AG04449 (cell line): ENCODE measurements at regions of chrX and their contacts with region 1.

Region 1: DNA sequence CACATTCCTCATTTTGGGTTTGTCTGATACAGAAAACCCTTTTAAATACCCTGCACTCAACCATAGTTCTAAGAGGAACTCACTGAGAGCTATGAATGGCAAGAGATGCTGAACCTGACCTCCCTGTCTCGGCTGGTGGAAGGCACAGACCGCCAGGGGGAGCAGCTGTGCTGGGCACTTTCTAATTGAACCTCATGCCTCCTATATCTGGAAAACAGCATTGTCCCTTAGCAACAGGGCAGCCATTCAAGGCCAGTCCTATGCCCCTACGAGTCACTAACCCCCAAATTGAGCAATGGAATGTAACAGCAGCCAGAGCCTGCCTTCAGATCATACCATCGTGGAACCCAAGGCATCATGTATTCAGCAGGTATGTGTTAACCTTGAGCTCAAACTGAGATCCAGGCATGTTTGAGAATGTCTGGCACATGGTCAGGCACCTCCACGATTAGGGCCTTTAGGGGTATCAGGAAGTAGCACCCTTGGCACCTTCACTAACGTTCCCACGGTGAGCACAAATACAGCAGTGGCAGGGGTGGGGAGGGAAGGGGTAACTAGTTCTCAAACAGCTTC is 5.1 kb downstream of the USP27X start:
- DNase-seq: no peak
- H3K4me3 ChIP-seq: no peak overlapping the region
- CTCF ChIP-seq: peak; percentile 72

Region 2: GRCh38 chrX:49816435-49816834 is 67.9 kb before region 1 on chrX:
- CTCF ChIA-PET with region 1: no interaction called
- POLR2A ChIA-PET with region 1: no interaction called
- DNase-seq: no peak
- H3K4me3 ChIP-seq: no peak overlapping the region
- CTCF ChIP-seq: no peak

Region 3: DNA sequence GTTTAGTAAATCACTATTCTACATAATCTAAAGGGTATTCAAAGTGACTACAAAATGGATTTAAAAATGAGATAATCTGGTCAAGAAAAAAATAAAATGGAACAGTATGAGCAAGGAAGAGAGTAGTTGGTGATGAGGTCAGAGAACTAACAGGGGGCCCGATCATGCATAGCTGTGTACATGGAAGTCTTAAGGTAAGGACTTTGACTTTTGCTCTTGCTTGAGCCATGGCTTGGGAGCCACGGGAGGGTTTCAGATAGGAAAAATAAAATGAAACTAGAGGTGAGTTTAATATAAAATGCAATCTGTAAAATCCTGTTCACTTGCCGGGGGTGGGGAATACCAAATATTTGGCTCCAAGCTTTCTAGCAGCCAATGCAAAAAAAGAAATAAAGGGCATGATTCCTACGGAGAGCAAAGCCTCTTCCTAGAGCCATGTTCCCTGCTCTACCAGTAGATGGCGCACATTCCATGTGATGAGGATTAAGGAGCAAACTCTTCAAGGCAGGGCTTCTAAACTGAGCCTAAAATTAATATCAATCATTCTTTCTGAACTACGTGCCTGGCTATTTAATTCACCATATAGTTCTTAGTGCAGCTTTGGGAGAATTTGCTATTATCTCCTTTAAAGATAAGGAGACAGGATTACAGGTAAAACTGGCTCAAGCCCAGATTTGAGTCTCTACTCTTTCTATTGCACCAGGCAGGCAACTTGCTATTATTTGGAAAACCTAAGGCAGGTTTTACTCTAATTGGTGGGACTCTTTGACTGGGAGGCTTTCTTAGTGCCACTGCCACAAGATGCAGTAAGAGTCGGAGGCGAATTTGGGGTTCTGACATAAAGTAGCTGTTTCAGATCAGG is 31.2 kb after region 1 on chrX:
- CTCF ChIA-PET with region 1: interaction called, 23 read pairs
- POLR2A ChIA-PET with region 1: no interaction called
- DNase-seq: no peak
- H3K4me3 ChIP-seq: no peak overlapping the region
- CTCF ChIP-seq: peak; percentile 74

Region 4: DNA sequence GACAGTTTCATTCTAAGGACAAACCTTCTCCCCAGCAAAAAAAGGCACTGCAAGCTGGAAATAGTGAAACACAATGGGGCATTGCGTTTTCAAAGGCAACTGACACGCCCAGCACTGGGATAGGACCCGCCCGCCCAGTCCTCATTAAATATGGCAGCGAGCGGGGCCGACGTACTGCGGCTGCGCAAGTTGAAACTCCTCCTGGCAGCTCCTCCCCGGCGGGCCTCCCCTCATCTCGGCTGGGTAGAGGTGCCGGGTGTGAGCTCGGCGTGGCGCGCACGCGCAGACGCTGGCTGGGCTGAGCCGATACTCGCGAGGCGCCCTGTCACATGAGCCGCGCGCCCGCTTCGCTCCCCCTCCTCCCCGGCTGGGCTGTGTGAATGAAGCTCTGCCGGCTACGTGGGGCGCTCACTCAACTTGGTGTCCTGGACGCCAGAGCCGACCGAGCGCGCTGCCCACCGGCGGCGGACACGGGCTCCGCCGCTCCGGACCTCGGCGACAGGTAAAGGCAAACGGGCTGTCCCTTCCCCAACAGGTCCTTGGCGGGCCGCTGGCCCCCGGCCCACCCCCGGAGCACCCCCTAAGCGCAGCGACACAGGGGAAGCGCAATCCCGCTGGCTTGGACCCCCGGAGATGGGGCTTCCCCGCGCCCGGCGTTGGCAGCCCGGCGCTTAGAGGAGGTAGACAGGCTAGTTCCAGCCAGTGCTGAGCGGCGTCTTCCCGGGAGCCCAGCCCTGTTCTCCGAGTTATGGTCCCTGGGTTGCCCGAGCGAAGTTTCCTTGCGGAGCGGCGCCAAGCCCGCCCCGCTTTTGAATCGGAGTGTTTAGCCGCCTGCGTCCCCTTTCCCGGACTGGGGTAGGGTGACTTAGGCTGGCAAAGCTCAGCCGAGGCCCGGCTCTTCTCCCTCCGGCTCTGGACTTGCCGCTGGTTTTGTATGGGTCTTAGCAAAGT is 38.2 kb after region 1 on chrX and contains the start of gene CLCN5:
- CTCF ChIA-PET with region 1: interaction called, 23 read pairs
- POLR2A ChIA-PET with region 1: no interaction called
- DNase-seq: peak; percentile 56
- H3K4me3 ChIP-seq: peak within 1 kb of the TSS; percentile 64
- CTCF ChIP-seq: no peak

Region 5: DNA sequence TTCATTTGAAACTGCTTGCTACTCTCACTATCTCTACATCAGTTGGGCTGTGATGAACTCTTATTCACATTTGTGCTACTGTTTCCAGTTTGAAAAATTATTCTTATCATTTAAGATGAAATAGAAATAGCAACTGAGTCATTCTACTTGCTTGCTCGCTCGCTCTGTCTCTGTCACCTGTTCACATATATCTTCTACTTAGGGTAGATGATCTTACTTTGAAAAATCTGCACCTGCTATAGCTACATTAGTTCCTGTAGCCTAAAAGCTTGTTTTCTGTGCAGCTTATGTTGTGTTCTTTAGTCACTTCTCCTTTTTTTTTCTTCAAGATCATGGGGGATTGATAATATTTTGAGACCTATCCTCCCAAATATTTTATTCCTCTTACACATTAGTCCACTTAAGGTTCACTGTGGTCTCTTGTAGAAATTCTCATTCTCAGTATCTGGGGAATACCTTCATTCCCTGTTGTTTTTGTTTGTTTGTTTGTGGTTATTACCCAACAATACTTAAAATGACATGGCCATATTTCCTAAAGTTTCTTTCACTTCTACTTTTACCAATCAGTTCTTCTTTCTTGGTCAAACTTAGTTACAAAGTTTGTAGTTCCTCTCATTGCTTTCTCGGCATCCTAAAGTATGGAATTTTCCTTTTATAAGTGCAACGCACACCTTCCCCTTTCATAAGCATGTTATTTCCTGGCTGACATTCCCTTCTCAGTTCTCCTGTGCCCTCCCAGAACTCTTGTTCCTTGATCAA is 74.5 kb after region 1 on chrX:
- CTCF ChIA-PET with region 1: no interaction called
- POLR2A ChIA-PET with region 1: no interaction called
- DNase-seq: no peak
- H3K4me3 ChIP-seq: no peak overlapping the region
- CTCF ChIP-seq: no peak

Region 6: GRCh38 chrX:50204364-50204899 is 320.1 kb after region 1 on chrX and contains the start of gene CCNB3:
- CTCF ChIA-PET with region 1: interaction called, 10 read pairs
- POLR2A ChIA-PET with region 1: no interaction called
- DNase-seq: no peak
- H3K4me3 ChIP-seq: peak within 1 kb of the TSS; percentile 37
- CTCF ChIP-seq: peak; percentile 48